Calu3 (cell line): ENCODE measurements at regions of chrX and their contacts with region 1.

Region 1: GRCh38 chrX:44651358-44651757 is 108.7 kb upstream of the FUNDC1 start:
- DNase-seq: peak; percentile 4
- H3K4me3 Mint-ChIP-seq: no peak overlapping the region
- H3K27ac Mint-ChIP-seq: no peak overlapping the region
- H3K4me1 Mint-ChIP-seq: no peaks in the 10 kb centered on the region
- H3K27me3 Mint-ChIP-seq: no peaks in the 10 kb centered on the region
- CTCF ChIP-seq: no peak

Region 2: GRCh38 chrX:44203791-44204190 is 447.6 kb before region 1 on chrX:
- CTCF ChIA-PET with region 1: interaction called, 11 read pairs
- intact Hi-C with region 1: no loop called
- DNase-seq: peak; percentile 24
- H3K4me3 Mint-ChIP-seq: no peak overlapping the region
- H3K27ac Mint-ChIP-seq: no peak overlapping the region
- H3K4me1 Mint-ChIP-seq: no peaks in the 10 kb centered on the region
- H3K27me3 Mint-ChIP-seq: no peaks in the 10 kb centered on the region
- CTCF ChIP-seq: no peak